H1 (cell line): ENCODE measurements at regions of chr3 and their contacts with region 1.

Region 1: DNA sequence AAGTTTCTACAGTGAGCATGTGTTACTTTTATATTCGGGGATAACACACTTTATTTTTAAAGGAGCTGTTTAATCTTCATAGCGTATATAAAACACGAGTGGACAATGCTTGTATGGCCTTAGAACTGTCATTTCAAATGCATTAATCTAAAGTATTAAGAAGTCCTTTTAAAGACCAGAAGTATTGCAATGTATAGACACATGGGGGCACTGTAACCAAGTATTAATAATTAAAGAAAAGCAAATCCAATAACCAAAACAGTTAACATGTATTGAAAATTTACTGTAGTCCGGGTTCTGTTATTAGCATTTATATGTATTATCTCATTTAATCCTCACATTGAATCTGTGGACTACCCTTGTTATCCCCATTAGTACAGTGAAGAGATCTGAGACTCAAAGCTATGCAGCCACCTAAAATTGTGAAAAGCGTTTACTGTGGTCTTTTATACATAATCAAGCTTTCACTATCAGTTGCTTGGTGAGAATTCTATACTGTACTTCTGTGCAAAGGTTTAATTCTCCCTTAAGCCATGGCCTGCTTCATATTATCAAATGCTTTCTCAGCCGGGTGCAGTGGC is 10.1 kb downstream of the ARL14 start:
- DNase-seq: no peak
- H3K4me3 ChIP-seq: no peak overlapping the region
- H3K27ac ChIP-seq: no peak overlapping the region
- H3K4me1 ChIP-seq: peaks cover 0 to 3% (median 0%) of the 10 kb centered on the region in 4 experiments; a peak in 1 of 7 replicates
- H3K27me3 ChIP-seq: no peaks in the 10 kb centered on the region
- CTCF ChIP-seq: peak in 1 of 3 experiments; percentile 5; a peak in 1 of 4 replicates
- EP300 ChIP-seq: no peak
- POLR2A ChIP-seq: no peak
- RAD21 ChIP-seq: peak in 1 of 2 experiments; percentile 13; a peak in 1 of 4 replicates

Region 2: GRCh38 chr3:160671231-160671630 is 15.8 kb before region 1 on chr3:
- CTCF ChIA-PET with region 1: interaction called, 10 read pairs
- POLR2A ChIA-PET with region 1: no interaction called
- DNase-seq: no peak
- H3K4me3 ChIP-seq: no peak overlapping the region
- H3K27ac ChIP-seq: no peak overlapping the region
- H3K4me1 ChIP-seq: no peaks in the 10 kb centered on the region
- H3K27me3 ChIP-seq: no peaks in the 10 kb centered on the region
- CTCF ChIP-seq: no peak
- EP300 ChIP-seq: no peak
- POLR2A ChIP-seq: no peak
- RAD21 ChIP-seq: no peak

Region 3: GRCh38 chr3:160676547-160677303 is 10.3 kb before region 1 on chr3 and contains the start of gene ARL14:
- CTCF ChIA-PET with region 1: interaction called, 20 read pairs
- POLR2A ChIA-PET with region 1: interaction called, 3 read pairs
- DNase-seq: peak in 1 of 2 experiments; percentile 21
- H3K4me3 ChIP-seq: no peak within 1 kb of the TSS
- H3K27ac ChIP-seq: no peak within 1 kb of the TSS
- H3K4me1 ChIP-seq: peaks cover 0 to 12% (median 5%) of the 10 kb centered on the region in 4 experiments; a peak in 4 of 7 replicates
- H3K27me3 ChIP-seq: no peaks in the 10 kb centered on the region
- CTCF ChIP-seq: no peak
- EP300 ChIP-seq: no peak
- POLR2A ChIP-seq: no peak
- RAD21 ChIP-seq: no peak
- total RNA-seq, gene ARL14: not detected in 2 replicates

Region 4: DNA sequence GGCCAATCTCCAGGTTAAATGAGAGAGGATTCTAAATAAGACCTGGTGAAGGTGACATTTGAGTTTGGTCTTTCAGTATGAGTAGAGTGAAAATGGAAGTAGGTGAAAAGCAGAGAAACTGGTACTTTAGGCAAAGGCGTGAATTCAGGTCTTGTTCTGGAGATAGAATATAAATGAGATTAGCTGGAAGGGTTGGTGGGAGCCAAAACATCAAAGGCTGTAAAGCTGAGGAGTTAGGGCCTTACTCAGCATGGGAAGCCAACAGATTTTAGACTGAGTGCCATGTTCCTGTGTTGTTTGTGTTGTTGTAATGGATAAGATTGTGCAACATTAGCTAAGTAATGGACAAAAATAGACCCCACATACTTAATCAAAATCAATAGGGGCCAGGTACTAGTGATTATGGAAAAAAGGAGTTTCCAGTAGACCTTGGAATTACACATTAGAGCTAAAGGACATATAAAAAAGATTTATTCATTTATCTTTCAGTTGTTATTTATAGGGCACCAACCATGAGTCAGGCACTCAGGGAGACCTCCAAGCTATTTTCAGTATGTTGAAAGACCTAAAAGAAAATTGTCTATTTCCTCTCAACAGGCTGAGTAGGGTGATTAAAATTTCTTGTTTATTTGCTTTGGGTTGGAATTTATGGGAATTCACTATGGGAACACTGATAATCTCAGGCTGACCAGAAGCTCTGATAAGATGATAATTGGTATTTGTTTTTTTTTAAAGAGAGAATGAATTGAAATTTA is 10.8 kb after region 1 on chr3:
- CTCF ChIA-PET with region 1: interaction called, 14 read pairs
- POLR2A ChIA-PET with region 1: no interaction called
- DNase-seq: no peak
- H3K4me3 ChIP-seq: no peak overlapping the region
- H3K27ac ChIP-seq: no peak overlapping the region
- H3K4me1 ChIP-seq: no peaks in the 10 kb centered on the region
- H3K27me3 ChIP-seq: no peaks in the 10 kb centered on the region
- CTCF ChIP-seq: no peak
- EP300 ChIP-seq: no peak
- POLR2A ChIP-seq: no peak
- RAD21 ChIP-seq: no peak

Region 5: DNA sequence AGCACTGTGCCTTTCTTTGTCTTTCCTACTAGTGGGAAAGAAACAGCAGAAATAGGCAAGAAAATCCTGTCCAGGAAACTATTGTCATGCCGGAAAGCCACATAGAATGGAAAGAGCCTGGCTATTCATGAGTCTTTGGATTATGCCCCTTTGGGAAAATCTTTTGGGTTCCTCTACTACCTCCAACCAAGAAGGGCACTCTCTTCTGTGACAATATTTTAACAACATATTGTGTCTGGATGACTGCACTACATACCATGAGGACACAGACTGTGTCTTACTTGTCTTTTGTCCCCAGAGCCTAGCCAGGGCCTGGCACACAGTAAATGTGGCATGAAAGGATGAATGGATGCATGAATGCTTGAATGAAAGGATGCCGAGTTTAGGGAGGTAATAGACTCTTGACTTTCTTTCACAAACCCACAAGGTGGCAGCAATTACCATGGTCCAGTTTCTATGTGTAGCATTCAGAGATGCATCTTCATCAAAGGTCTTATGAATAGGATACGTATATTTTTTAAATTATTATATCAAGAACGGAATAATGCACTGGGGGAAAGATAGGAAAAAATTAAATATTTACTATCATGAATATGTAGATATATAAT is 20.2 kb after region 1 on chr3:
- CTCF ChIA-PET with region 1: interaction called, 10 read pairs
- POLR2A ChIA-PET with region 1: no interaction called
- DNase-seq: no peak
- H3K4me3 ChIP-seq: no peak overlapping the region
- H3K27ac ChIP-seq: no peak overlapping the region
- H3K4me1 ChIP-seq: no peaks in the 10 kb centered on the region
- H3K27me3 ChIP-seq: no peaks in the 10 kb centered on the region
- CTCF ChIP-seq: peak in 2 of 3 experiments; percentile 53 to 63; a peak in 2 of 4 replicates
- EP300 ChIP-seq: no peak
- POLR2A ChIP-seq: no peak
- RAD21 ChIP-seq: peak; percentile 85 to 87

Region 6: GRCh38 chr3:160941885-160942494 is 254.9 kb after region 1 on chr3:
- CTCF ChIA-PET with region 1: interaction called, 18 read pairs
- POLR2A ChIA-PET with region 1: no interaction called
- DNase-seq: peak in 1 of 2 experiments; percentile 83
- H3K4me3 ChIP-seq: no peak overlapping the region
- H3K27ac ChIP-seq: no peak overlapping the region
- H3K4me1 ChIP-seq: no peaks in the 10 kb centered on the region
- H3K27me3 ChIP-seq: no peaks in the 10 kb centered on the region
- CTCF ChIP-seq: peak in 2 of 3 experiments; percentile 52 to 77; a peak in 2 of 4 replicates
- EP300 ChIP-seq: no peak
- POLR2A ChIP-seq: no peak
- RAD21 ChIP-seq: peak; percentile 83